Aorta (tissue), 5 donors: ENCODE measurements at regions of chr11 and their contacts with region 1.

Region 1: GRCh38 chr11:11798586-11799438 is 43.0 kb upstream of the USP47 start:
- DNase-seq: peak; percentile 78 to 95
- ATAC-seq: peak; percentile 91
- H3K4me3 ChIP-seq: no peak overlapping the region
- H3K27ac ChIP-seq: no peak overlapping the region
- H3K4me1 ChIP-seq: no peaks in the 10 kb centered on the region
- H3K27me3 ChIP-seq: no peaks in the 10 kb centered on the region

Region 2: DNA sequence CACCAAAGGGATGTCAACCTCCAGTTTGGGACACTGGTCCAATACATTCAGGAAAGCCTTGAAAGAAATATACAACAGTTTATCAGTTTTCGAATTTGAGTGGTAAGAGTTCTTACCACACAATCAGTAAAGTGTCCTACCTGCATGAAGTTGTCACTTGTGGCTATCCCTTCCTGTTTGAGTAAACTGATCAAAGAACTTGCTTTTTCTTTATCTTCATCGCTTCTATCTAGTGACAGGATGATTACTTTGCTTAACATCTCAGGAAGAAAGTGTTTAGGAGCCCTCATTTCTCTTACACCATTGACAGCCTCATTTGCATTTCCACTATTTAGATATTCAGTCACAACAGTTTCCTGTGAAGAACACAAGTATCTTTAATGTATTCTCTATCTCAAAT is 998.5 kb before region 1 on chr11:
- intact Hi-C with region 1: loop called in 1 of 2 experiments (anchors 5 kb)
- DNase-seq: no peak
- ATAC-seq: no peak
- H3K4me3 ChIP-seq: no peak overlapping the region
- H3K27ac ChIP-seq: no peak overlapping the region
- H3K4me1 ChIP-seq: no peaks in the 10 kb centered on the region
- H3K27me3 ChIP-seq: no peaks in the 10 kb centered on the region

Region 3: GRCh38 chr11:11757909-11758308 is 40.9 kb before region 1 on chr11:
- intact Hi-C with region 1: no loop called
- DNase-seq: no peak
- ATAC-seq: no peak
- H3K4me3 ChIP-seq: no peak overlapping the region
- H3K27ac ChIP-seq: no peak overlapping the region
- H3K4me1 ChIP-seq: no peaks in the 10 kb centered on the region
- H3K27me3 ChIP-seq: no peaks in the 10 kb centered on the region